ENCODE measurements at regions of chr17 and their contacts with region 1.

Region 1: GRCh38 chr17:54992797-54993639 is 24.5 kb downstream of the STXBP4 start:
- DNase-seq: peak in 1 of 2 donors; percentile 8
- ATAC-seq: peak in 2 of 8 donors; percentile 39 to 48
- H3K4me3 ChIP-seq: no peak overlapping the region
- H3K27ac ChIP-seq: no peak overlapping the region
- H3K4me1 ChIP-seq: no peaks in the 10 kb centered on the region
- H3K27me3 ChIP-seq: no peaks in the 10 kb centered on the region
- CTCF ChIP-seq: peak; percentile 43 to 81 (median 70)

Region 2: GRCh38 chr17:55067697-55068439 is 74.8 kb after region 1 on chr17:
- intact Hi-C with region 1: loop called in 1 of 10 experiments (anchors 2 kb)
- DNase-seq: no peak
- ATAC-seq: no peak
- H3K4me3 ChIP-seq: no peak overlapping the region
- H3K27ac ChIP-seq: no peak overlapping the region
- H3K4me1 ChIP-seq: no peaks in the 10 kb centered on the region
- H3K27me3 ChIP-seq: no peaks in the 10 kb centered on the region
- CTCF ChIP-seq: no peak

Region 3: DNA sequence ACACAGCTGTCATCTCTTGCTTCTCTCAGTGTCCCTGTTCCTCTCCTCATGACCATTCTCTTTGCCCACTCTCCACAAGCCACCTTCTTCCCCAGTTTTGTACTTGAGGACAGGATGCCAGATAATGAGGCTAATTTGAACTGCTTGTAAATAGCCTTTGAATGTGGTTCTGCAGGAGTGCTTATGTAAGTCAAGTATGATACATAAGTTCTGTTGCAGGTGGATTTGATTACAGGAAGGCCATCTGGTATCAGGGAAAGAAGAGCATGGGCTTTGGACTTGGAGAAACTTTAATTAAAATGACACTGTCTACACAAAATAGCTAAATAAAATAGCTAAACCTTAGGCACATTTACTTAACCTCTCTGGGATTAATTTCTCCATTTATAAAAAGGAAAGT is 151.5 kb after region 1 on chr17:
- intact Hi-C with region 1: no loop called
- DNase-seq: no peak
- ATAC-seq: no peak
- H3K4me3 ChIP-seq: no peak overlapping the region
- H3K27ac ChIP-seq: no peak overlapping the region
- H3K4me1 ChIP-seq: no peaks in the 10 kb centered on the region
- H3K27me3 ChIP-seq: no peaks in the 10 kb centered on the region
- CTCF ChIP-seq: no peak

Region 4: DNA sequence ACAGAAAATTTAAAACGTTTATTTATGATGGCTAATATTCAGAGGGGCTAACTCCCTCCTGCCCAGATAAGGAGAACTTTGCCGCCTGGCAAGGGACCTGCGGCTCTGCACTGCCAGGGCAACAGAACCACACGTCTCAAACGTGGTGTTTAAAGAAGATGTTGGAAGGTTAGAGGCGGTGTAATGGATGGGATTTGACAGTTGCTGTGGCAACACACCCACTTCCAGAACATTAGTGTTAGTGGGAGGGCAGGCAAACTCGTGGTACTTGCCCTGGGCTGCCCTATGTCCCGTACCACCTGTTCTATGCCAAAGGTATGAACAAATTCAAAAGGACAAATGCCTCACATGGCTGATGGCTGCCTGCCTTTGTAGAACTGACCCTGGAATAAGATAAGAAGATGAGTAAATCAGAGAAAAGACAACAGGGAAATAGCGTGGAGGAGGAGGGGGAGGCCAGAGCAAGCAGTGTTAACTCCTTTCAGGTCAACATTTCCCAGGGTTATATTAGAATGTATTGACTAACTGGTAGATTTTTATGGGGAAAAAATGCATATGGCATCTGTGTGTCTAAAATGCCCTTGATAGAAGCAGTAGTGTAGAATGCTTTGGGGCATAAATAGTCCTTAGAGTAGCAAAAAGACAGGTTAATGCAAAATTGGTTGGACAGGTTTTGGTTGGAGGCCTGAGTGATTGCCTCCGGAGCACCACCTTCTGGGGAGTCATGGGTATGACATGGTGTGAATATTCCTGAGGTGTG is 302.6 kb after region 1 on chr17:
- intact Hi-C with region 1: loop called in 5 of 10 experiments (anchors 5 to 10 kb)
- DNase-seq: peak in 1 of 2 donors; percentile 42
- ATAC-seq: peak; percentile 73 to 92 (median 84)
- H3K4me3 ChIP-seq: no peak overlapping the region
- H3K27ac ChIP-seq: peak overlapping the region in 5 of 10 donors; percentile 25 to 42 (median 38)
- H3K4me1 ChIP-seq: peaks cover 0 to 30% (median 12%) of the 10 kb centered on the region in 9 donors
- H3K27me3 ChIP-seq: no peaks in the 10 kb centered on the region
- CTCF ChIP-seq: peak; percentile 80 to 89 (median 87)

Region 5: GRCh38 chr17:55348749-55349354 is 355.8 kb after region 1 on chr17:
- intact Hi-C with region 1: loop called (anchors 2 to 10 kb)
- DNase-seq: peak; percentile 17 to 33
- ATAC-seq: peak in 7 of 8 donors; percentile 57 to 76 (median 67)
- H3K4me3 ChIP-seq: no peak overlapping the region
- H3K27ac ChIP-seq: no peak overlapping the region
- H3K4me1 ChIP-seq: peaks cover 0 to 7% (median 0%) of the 10 kb centered on the region in 9 donors
- H3K27me3 ChIP-seq: no peaks in the 10 kb centered on the region
- CTCF ChIP-seq: peak; percentile 61 to 93 (median 88)

Region 6: DNA sequence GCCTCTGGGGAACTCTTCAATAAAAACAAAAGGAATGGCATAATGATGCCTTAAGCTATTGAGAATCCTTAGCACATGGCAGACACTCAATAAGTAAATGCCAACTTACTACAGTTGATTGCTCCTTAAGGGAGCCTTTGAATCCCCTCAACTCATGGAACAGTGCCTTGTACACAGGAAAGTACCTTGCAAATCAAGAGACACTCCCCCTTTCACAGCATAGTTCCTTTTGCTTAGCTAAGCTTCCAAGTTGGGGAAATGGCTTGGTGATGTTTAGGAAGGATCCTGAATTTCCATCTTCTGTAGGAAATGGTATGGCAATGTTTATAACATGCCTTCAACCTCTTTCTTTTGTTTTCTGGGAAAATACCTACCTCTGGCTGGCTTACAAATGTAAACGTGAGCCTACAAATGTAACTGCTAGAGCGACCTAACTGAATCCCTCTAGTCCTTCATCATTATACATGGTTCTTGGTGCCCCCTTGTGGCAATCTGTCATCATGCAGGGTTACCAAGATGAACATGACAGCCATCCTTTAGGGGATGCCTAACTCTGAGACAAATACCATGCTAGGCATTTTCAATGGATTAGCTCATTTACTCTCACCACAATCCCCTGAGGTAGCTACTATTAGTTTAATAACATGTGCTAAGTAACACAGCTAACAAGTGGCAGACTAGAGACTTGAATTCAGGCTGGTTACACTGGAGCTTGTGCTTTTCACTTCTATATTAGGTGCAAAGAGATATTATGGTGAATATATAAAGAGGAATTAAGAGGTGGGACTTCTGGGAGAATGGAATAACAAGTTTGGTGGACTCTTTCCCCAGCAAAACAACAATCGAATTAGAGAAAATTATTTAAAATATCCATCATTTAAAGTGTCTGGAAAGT is 363.7 kb after region 1 on chr17:
- intact Hi-C with region 1: loop called in 1 of 10 experiments (anchors 2 kb)
- DNase-seq: peak; percentile 23 to 68
- ATAC-seq: peak in 7 of 8 donors; percentile 64 to 83 (median 74)
- H3K4me3 ChIP-seq: no peak overlapping the region
- H3K27ac ChIP-seq: no peak overlapping the region
- H3K4me1 ChIP-seq: no peaks in the 10 kb centered on the region
- H3K27me3 ChIP-seq: no peaks in the 10 kb centered on the region
- CTCF ChIP-seq: peak; percentile 41 to 86 (median 79)

Region 7: GRCh38 chr17:55513885-55514591 is 521.0 kb after region 1 on chr17:
- intact Hi-C with region 1: loop called in 7 of 10 experiments (anchors 5 to 10 kb)
- DNase-seq: peak in 1 of 2 donors; percentile 74
- ATAC-seq: peak in 7 of 8 donors; percentile 49 to 78 (median 55)
- H3K4me3 ChIP-seq: no peak overlapping the region
- H3K27ac ChIP-seq: no peak overlapping the region
- H3K4me1 ChIP-seq: peaks cover 0 to 7% (median 0%) of the 10 kb centered on the region in 9 donors
- H3K27me3 ChIP-seq: peaks cover 0 to 11% (median under 1%) of the 10 kb centered on the region in 7 donors
- CTCF ChIP-seq: peak; percentile 88 to 95 (median 93)